ENCODE measurements at regions of chrX and their contacts with region 1.

Region 1: GRCh38 chrX:134423615-134424014 is 36.4 kb upstream of the HPRT1 start:
- DNase-seq: no peak
- ATAC-seq: no peak
- H3K4me3 ChIP-seq: no peak overlapping the region
- H3K27ac ChIP-seq: no peak overlapping the region
- H3K4me1 ChIP-seq: no peaks in the 10 kb centered on the region
- H3K27me3 ChIP-seq: no peaks in the 10 kb centered on the region
- CTCF ChIP-seq: peak in 1 of 3 experiments; percentile 22; a peak in 1 of 6 replicates
- EP300 ChIP-seq: no peak
- POLR2A ChIP-seq: no peak
- RAD21 ChIP-seq: peak; percentile 27; the same call in 1 of the 2 replicates

Region 2: GRCh38 chrX:134460005-134460861 is 36.6 kb after region 1 on chrX and contains the start of gene HPRT1:
- CTCF ChIA-PET with region 1: no interaction called
- POLR2A ChIA-PET with region 1: no interaction called
- RAD21 ChIA-PET with region 1: no interaction called
- SMC1A ChIA-PET with region 1: interaction called, 8 read pairs
- in situ Hi-C with region 1: no loop called
- intact Hi-C with region 1: loop called (anchors 2 kb)
- DNase-seq: no peak
- ATAC-seq: peak; percentile 91
- H3K4me3 ChIP-seq: peak within 1 kb of the TSS; percentile 70
- H3K27ac ChIP-seq: peak within 1 kb of the TSS; percentile 64
- H3K4me1 ChIP-seq: no peaks in the 10 kb centered on the region
- H3K27me3 ChIP-seq: no peaks in the 10 kb centered on the region
- CTCF ChIP-seq: no peak
- EP300 ChIP-seq: no peak
- POLR2A ChIP-seq: peak; percentile 87
- RAD21 ChIP-seq: no peak
- polyA plus RNA-seq, gene HPRT1: 105 to 111 TPM

Measured in GM12878 (cell line).